Lower leg skin (tissue), 4 donors: ENCODE measurements at regions of chr3 and their contacts with region 1.

Region 1: DNA sequence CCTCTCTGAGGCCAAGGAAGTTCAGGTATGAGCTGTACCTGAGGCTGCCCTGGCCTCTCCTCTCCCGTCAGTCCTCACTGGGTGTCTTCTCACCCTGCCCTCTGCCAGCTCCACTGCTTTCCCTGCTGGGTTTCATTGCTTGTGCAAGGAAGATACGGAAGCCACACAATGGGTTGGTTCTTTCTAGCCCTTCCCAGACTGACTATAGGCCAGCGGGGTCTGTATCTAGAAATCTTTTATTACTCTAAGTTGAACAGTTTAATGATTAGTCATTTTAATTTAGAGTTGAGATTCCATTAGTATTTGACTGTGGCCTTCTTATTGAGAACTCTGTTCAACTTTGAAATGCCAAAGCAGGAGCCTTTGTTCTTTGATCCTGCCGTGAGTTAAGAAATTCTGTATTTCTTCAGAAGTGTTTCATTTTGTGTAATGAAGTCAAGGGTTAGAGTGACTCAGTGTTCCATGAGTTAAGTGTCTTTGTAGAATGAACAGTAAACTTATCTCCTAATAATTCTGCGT is 16.2 kb downstream of the C3orf62 start:
- DNase-seq: no peak
- H3K4me3 ChIP-seq: no peak overlapping the region
- CTCF ChIP-seq: no peak
- POLR2A ChIP-seq: no peak

Region 2: GRCh38 chr3:48215466-48215865 is 1045.4 kb before region 1 on chr3:
- intact Hi-C with region 1: loop called (anchors 5 kb)
- DNase-seq: peak in 1 of 2 donors; percentile 60
- H3K4me3 ChIP-seq: no peak overlapping the region
- CTCF ChIP-seq: no peak
- POLR2A ChIP-seq: no peak

Region 3: GRCh38 chr3:49327485-49327884 is 66.6 kb after region 1 on chr3:
- intact Hi-C with region 1: no loop called
- DNase-seq: no peak
- H3K4me3 ChIP-seq: no peak overlapping the region
- CTCF ChIP-seq: no peak
- POLR2A ChIP-seq: no peak

Region 4: DNA sequence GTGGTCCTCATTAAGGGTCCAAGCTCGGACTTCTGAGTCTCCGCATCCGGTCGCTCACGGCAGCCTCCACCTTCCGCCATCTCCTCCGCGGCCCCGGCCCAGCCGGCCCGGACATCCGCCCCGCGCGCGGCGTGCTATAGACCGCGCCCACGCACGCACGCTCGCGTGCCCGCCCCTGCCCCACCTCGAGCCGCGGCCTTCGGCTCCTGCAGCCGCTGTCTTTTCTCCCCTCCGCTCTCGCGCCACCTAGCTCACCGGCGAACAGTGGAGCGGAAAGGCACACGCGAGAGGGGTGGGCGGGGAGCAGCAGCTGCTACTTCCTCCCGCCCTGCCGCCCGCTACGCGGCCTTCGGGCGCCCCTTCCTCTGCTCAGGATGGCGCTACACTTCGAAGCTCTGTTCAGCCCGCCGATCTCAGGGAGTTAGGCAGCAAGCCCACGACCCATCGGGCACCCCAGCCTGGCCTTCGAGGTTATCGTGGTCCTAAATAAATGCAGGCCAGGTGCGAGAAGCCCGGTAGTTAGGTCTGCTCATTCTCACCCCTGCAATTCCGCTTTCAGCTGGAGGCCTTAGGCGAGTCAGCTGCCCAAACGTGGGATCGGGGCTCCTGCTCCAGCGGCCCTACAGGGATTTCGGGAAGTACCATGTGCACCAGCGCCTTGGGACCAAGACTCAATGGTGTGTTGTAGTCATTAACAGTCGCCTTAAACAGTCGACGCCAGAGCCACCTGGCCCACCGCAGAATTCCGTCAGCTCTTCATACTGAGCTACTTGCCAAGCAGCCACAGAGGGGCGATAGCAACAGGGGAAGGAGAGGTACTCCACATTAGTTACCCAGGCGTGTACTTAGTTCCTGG is 79.3 kb after region 1 on chr3 and contains the start of gene USP4:
- intact Hi-C with region 1: no loop called
- DNase-seq: peak; percentile 87 to 97
- H3K4me3 ChIP-seq: peak within 1 kb of the TSS; percentile 91
- CTCF ChIP-seq: no peak
- POLR2A ChIP-seq: no peak
- total RNA-seq, gene USP4: 29.9 to 34.2 (median 31.5) TPM

Region 5: GRCh38 chr3:49566312-49566711 is 305.4 kb after region 1 on chr3:
- intact Hi-C with region 1: no loop called
- DNase-seq: no peak
- H3K4me3 ChIP-seq: no peak overlapping the region
- CTCF ChIP-seq: no peak
- POLR2A ChIP-seq: no peak